ENCODE measurements at regions of chr17 and their contacts with region 1.

Region 1: DNA sequence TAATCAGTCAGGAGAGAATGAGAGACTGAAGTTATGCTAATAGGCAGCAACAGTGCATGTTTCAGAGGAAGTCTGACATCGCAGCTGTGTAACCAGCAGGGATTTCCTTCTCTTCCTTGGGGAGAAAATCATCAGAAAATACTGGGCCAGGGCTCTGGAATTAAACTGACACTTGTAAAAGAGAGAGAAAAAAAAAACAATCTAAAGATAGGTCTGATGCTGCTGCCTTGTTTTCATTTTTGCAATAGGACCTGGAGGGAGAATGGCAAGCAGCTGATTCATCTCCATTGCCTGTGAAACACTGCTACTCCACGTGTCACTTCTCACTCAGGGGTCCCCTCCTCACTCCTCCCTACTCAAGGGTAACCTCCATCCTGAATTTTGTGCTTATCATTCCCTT is 17.7 kb upstream of the CORO6 start:
- DNase-seq: no peak
- ATAC-seq: no peak
- H3K4me3 Mint-ChIP-seq: no peak overlapping the region
- H3K27ac Mint-ChIP-seq: peak overlapping the region; percentile 89
- H3K4me1 Mint-ChIP-seq: peaks cover 32% of the 10 kb centered on the region
- H3K27me3 Mint-ChIP-seq: no peaks in the 10 kb centered on the region
- CTCF ChIP-seq: no peak

Region 2: GRCh38 chr17:29461483-29462206 is 178.8 kb before region 1 on chr17:
- CTCF ChIA-PET with region 1: no interaction called
- POLR2A ChIA-PET with region 1: no interaction called
- intact Hi-C with region 1: no loop called
- DNase-seq: no peak
- ATAC-seq: no peak
- H3K4me3 Mint-ChIP-seq: no peak overlapping the region
- H3K27ac Mint-ChIP-seq: no peak overlapping the region
- H3K4me1 Mint-ChIP-seq: peaks cover 22% of the 10 kb centered on the region
- H3K27me3 Mint-ChIP-seq: no peaks in the 10 kb centered on the region
- CTCF ChIP-seq: no peak

Region 3: GRCh38 chr17:29603109-29603674 is 37.2 kb before region 1 on chr17:
- CTCF ChIA-PET with region 1: no interaction called
- POLR2A ChIA-PET with region 1: no interaction called
- intact Hi-C with region 1: no loop called
- DNase-seq: no peak
- ATAC-seq: no peak
- H3K4me3 Mint-ChIP-seq: no peak overlapping the region
- H3K27ac Mint-ChIP-seq: no peak overlapping the region
- H3K4me1 Mint-ChIP-seq: no peaks in the 10 kb centered on the region
- H3K27me3 Mint-ChIP-seq: no peaks in the 10 kb centered on the region
- CTCF ChIP-seq: no peak

Region 4: GRCh38 chr17:29682054-29682453 is 41.6 kb after region 1 on chr17:
- CTCF ChIA-PET with region 1: interaction called, 9 read pairs
- POLR2A ChIA-PET with region 1: interaction called, 3 read pairs
- intact Hi-C with region 1: loop called (anchors 5 kb)
- DNase-seq: no peak
- ATAC-seq: peak; percentile 93
- H3K4me3 Mint-ChIP-seq: peak overlapping the region; percentile 21
- H3K27ac Mint-ChIP-seq: peak overlapping the region; percentile 81
- H3K4me1 Mint-ChIP-seq: peaks cover 27% of the 10 kb centered on the region
- H3K27me3 Mint-ChIP-seq: no peaks in the 10 kb centered on the region
- CTCF ChIP-seq: no peak

Region 5: GRCh38 chr17:29789196-29790170 is 149.1 kb after region 1 on chr17:
- CTCF ChIA-PET with region 1: interaction called, 12 read pairs
- POLR2A ChIA-PET with region 1: no interaction called
- intact Hi-C with region 1: no loop called
- DNase-seq: no peak
- ATAC-seq: no peak
- H3K4me3 Mint-ChIP-seq: no peak overlapping the region
- H3K27ac Mint-ChIP-seq: no peak overlapping the region
- H3K4me1 Mint-ChIP-seq: peaks cover 5% of the 10 kb centered on the region
- H3K27me3 Mint-ChIP-seq: no peaks in the 10 kb centered on the region
- CTCF ChIP-seq: no peak

Region 6: DNA sequence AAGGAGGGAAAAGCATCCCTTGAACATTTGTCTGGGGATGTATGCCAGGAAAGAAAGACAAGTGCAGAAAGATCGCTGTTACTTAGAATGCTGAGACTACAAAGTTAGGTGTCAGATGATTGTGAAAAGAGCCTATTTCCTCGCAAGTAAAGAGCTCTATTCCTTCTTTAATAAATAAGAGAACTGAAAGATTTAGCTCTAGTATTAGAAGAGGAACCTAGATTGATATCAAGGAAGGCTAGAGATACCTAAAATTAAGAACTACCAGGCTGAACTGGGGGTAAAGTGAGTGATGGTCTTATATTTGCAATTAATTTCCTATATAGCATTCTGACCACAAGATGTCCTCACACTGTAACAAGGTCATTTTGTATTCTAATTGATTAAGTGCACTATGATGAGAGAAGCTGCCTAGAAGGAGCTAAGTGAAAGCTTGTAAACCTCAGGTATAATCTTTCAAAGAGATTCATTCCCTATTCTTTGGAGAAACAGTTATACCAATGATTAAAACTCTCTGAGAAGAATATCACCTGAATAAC is 227.3 kb after region 1 on chr17:
- CTCF ChIA-PET with region 1: interaction called, 11 read pairs
- POLR2A ChIA-PET with region 1: no interaction called
- intact Hi-C with region 1: no loop called
- DNase-seq: no peak
- ATAC-seq: peak; percentile 37
- H3K4me3 Mint-ChIP-seq: no peak overlapping the region
- H3K27ac Mint-ChIP-seq: peak overlapping the region; percentile 3
- H3K4me1 Mint-ChIP-seq: peaks cover 49% of the 10 kb centered on the region
- H3K27me3 Mint-ChIP-seq: no peaks in the 10 kb centered on the region
- CTCF ChIP-seq: no peak

Region 7: GRCh38 chr17:30021708-30022317 is 381.4 kb after region 1 on chr17:
- CTCF ChIA-PET with region 1: interaction called, 23 read pairs
- POLR2A ChIA-PET with region 1: no interaction called
- intact Hi-C with region 1: loop called (anchors 1 kb)
- DNase-seq: no peak
- ATAC-seq: peak; percentile 66
- H3K4me3 Mint-ChIP-seq: no peak overlapping the region
- H3K27ac Mint-ChIP-seq: no peak overlapping the region
- H3K4me1 Mint-ChIP-seq: no peaks in the 10 kb centered on the region
- H3K27me3 Mint-ChIP-seq: no peaks in the 10 kb centered on the region
- CTCF ChIP-seq: peak; percentile 83

Measured in activated B cell treated with CpG ODN at 0.5 μM for 24 hours (primary cell).